CD8-positive, alpha-beta memory T cell (primary cell): ENCODE measurements at regions of chr10 and their contacts with region 1.

Region 1: GRCh38 chr10:123994417-123995081 is 98.8 kb downstream of the CHST15 start:
- DNase-seq: peak; percentile 63 to 80 (median 70)
- H3K4me3 ChIP-seq: peak overlapping the region; percentile 7
- H3K4me3 Mint-ChIP-seq: peak overlapping the region in 6 of 7 donors; percentile 57 to 82 (median 64)
- H3K27ac ChIP-seq: no peak overlapping the region
- H3K27ac Mint-ChIP-seq: no peak overlapping the region
- H3K4me1 ChIP-seq: peaks cover 11% of the 10 kb centered on the region
- H3K4me1 Mint-ChIP-seq: peaks cover 9 to 15% (median 12%) of the 10 kb centered on the region in 3 donors
- H3K27me3 ChIP-seq: peaks cover 15% of the 10 kb centered on the region
- H3K27me3 Mint-ChIP-seq: peaks cover 33 to 71% of the 10 kb centered on the region in 2 donors

Region 2: DNA sequence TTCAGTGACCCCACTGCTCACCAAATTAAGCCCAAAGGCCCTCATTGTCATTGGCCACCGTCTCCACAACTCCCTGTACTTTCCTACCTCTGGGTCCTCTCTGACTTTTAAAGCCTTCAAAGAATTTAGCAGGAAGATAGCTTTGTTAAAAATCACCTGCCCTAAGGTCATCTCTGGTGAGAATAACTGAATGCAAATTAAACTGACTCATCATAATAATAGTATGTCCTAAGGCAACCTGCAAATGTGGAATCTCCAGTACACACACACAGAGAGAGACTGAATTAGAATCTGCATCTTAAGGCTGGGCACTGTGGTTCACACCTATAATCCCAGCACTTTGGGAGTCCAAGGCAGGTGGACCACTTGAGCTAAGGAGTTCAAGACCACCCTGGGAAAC is 400.0 kb after region 1 on chr10:
- CTCF ChIA-PET with region 1: interaction called, 92 read pairs
- POLR2A ChIA-PET with region 1: no interaction called
- DNase-seq: no peak
- H3K4me3 ChIP-seq: no peak overlapping the region
- H3K4me3 Mint-ChIP-seq: no peak overlapping the region
- H3K27ac ChIP-seq: no peak overlapping the region
- H3K27ac Mint-ChIP-seq: no peak overlapping the region
- H3K4me1 ChIP-seq: peaks cover under 1% of the 10 kb centered on the region
- H3K4me1 Mint-ChIP-seq: peaks cover 0 to 4% (median 0%) of the 10 kb centered on the region in 3 donors
- H3K27me3 ChIP-seq: no peaks in the 10 kb centered on the region
- H3K27me3 Mint-ChIP-seq: no peaks in the 10 kb centered on the region